Endothelial cell of umbilical vein (primary cell): ENCODE measurements at regions of chr4 and their contacts with region 1.

Region 1: DNA sequence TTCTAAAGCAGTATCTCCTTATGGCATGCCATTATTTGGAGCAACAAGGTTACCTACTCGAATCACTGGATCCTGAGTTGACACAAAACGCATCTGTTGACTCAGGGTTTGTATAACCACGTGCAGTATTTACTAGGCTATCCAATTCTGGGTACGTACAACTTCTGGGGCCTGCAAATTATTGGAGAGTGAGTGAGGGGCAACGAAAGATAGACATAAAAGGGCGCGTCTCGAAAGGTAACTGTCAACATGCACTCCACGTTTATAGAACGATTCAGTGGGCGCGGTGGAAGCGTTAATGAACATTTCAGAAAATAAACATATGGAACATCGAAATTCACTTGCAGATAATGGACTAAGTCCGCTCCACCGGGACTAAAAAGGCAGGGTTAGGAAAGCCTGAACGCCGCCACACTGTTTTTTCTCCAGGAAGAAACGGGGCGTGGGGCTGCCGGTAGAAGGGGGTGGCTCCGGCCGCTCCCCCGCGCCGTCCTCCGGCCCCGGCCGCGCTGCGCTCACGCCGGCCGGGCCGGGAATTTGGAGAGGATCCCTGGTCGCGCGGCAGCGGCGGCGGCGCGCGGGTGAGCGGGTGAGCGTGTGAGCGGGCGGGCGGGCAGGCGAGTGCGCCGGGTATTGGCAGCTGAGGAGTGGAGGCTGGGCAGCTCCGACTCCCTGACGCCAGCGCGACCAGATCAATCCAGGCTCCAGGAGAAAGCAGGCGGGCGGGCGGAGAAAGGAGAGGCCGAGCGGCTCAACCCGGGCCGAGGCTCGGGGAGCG is at the start of gene SMAD1:
- DNase-seq: peak; percentile 76
- H3K4me3 ChIP-seq: peak within 1 kb of the TSS; percentile 82 to 99 (median 98)
- H3K27ac ChIP-seq: peak within 1 kb of the TSS; percentile 60
- H3K4me1 ChIP-seq: peaks cover 18% of the 10 kb centered on the region
- H3K27me3 ChIP-seq: no peaks in the 10 kb centered on the region
- CTCF ChIP-seq: no peak
- POLR2A ChIP-seq: peak; percentile 59
- total RNA-seq, gene SMAD1: 93.5 and 101 TPM in 2 replicates

Region 2: GRCh38 chr4:145180298-145181090 is 300.9 kb before region 1 on chr4 and contains the start of gene OTUD4:
- CTCF ChIA-PET with region 1: no interaction called
- POLR2A ChIA-PET with region 1: no interaction called
- dilution Hi-C with region 1: no loop called
- intact Hi-C with region 1: loop called (anchors 5 kb)
- DNase-seq: peak; percentile 96
- H3K4me3 ChIP-seq: peak within 1 kb of the TSS; percentile 78 to 93 (median 92)
- H3K27ac ChIP-seq: peak within 1 kb of the TSS; percentile 78
- H3K4me1 ChIP-seq: peaks cover 18% of the 10 kb centered on the region
- H3K27me3 ChIP-seq: no peaks in the 10 kb centered on the region
- CTCF ChIP-seq: peak in 1 of 2 donors; percentile 25
- POLR2A ChIP-seq: no peak
- total RNA-seq, gene OTUD4: 39.5 and 40.9 TPM in 2 replicates

Region 3: DNA sequence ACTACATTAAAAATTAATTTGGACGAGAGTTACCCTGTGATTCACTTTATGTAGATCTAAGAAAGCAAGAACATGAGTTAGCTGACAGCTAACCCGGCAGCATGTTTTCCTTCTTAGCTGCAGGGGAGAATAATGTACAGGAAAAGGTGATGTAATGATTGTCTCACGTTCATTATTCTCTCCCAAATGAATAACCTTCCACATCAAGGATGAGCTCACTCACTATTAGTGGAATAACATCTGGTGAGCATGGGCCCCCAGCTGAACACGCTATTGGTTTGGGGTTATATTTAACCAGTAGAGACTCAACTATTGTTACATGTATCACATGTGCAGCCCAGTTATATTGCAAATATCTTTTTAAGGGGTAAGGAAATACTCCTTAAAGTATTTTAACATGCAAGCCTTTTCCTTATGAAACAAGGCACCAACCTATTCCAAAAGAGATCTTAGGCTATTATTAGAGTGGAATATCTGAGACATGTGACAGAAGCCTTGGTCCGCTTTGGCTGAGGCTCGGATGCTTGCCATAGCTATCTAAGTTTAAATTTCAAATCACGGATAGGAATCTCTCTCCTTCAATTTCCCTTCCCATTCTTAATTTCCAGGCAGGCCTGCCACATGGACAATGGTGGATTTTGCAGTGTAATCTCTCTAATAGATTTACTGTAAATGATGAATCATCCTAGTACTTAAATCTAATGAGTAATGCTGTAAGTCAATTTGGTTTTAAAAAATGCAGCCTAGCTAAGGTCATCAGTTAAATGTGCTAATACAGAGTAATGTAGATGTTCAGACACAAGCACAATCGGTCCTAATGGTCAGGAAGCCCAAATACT is 202.0 kb before region 1 on chr4:
- CTCF ChIA-PET with region 1: no interaction called
- POLR2A ChIA-PET with region 1: no interaction called
- dilution Hi-C with region 1: no loop called
- intact Hi-C with region 1: loop called (anchors 1 kb)
- DNase-seq: peak; percentile 84
- H3K4me3 ChIP-seq: no peak overlapping the region
- H3K27ac ChIP-seq: peak overlapping the region; percentile 97
- H3K4me1 ChIP-seq: peaks cover 38% of the 10 kb centered on the region
- H3K27me3 ChIP-seq: no peaks in the 10 kb centered on the region
- CTCF ChIP-seq: no peak
- POLR2A ChIP-seq: no peak

Region 4: DNA sequence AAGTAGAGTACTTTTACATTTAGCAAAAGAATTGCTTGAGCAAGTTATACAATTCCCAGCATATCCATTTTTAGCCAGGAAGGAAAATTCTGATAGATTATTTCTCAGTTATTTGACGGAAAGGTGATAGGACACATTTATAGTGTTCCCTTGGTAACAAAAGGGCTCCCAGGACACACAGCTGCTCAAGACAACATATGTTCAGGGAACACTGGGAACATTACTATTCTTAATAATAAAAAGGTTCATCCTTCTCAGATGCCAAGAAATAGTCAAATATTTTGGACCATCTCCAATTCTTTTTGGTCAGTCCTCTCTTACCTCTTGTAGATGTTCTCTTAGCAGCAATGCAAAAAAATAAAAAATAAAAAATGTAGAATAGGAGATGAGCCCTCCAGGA is 66.5 kb before region 1 on chr4:
- CTCF ChIA-PET with region 1: no interaction called
- POLR2A ChIA-PET with region 1: no interaction called
- dilution Hi-C with region 1: no loop called
- intact Hi-C with region 1: no loop called
- DNase-seq: no peak
- H3K4me3 ChIP-seq: no peak overlapping the region
- H3K27ac ChIP-seq: no peak overlapping the region
- H3K4me1 ChIP-seq: no peaks in the 10 kb centered on the region
- H3K27me3 ChIP-seq: peaks cover 0 to 4% of the 10 kb centered on the region in 2 experiments
- CTCF ChIP-seq: no peak
- POLR2A ChIP-seq: no peak

Region 5: DNA sequence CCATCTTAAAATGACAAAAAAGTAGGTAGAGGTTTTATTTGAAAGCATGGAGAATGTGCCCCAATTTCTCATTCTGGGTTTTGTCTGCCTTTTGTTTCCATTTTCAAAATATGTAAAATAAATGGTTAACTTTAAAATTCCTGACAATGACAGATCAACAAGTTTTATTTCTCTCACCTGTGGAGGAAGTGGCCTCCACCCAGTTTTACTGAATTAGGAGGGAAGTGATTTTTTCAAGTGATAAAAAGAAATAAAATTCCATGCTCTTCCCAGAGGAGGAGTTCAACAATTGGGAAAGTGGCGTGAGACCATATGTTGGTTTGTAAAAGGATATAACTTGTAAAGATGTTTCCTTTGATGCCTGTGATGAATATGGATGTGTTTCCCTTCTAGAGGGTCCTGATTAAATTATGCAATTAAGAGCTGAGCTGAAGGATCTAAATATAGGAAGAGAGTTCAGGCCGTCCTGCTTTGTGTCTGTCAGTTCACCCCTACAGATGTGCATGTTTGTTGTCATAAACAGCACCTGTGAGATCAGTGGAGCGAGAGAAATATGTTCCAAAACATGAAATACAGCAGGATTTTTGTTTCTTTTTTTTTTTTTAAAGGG is 19.8 kb after region 1 on chr4:
- CTCF ChIA-PET with region 1: interaction called, 3 read pairs
- POLR2A ChIA-PET with region 1: interaction called, 6 read pairs
- dilution Hi-C with region 1: no loop called
- intact Hi-C with region 1: loop called (anchors 1 kb)
- DNase-seq: peak; percentile 91
- H3K4me3 ChIP-seq: no peak overlapping the region
- H3K27ac ChIP-seq: peak overlapping the region; percentile 27
- H3K4me1 ChIP-seq: peaks cover 54% of the 10 kb centered on the region
- H3K27me3 ChIP-seq: no peaks in the 10 kb centered on the region
- CTCF ChIP-seq: no peak
- POLR2A ChIP-seq: no peak

Region 6: GRCh38 chr4:145609481-145610427 is 128.4 kb after region 1 on chr4:
- CTCF ChIA-PET with region 1: interaction called, 9 read pairs
- POLR2A ChIA-PET with region 1: no interaction called
- dilution Hi-C with region 1: no loop called
- intact Hi-C with region 1: loop called (anchors 1 kb)
- DNase-seq: peak; percentile 91
- H3K4me3 ChIP-seq: no peak overlapping the region
- H3K27ac ChIP-seq: no peak overlapping the region
- H3K4me1 ChIP-seq: peaks cover 8% of the 10 kb centered on the region
- H3K27me3 ChIP-seq: peaks cover 0 to 10% of the 10 kb centered on the region in 2 experiments
- CTCF ChIP-seq: peak; percentile 60 to 67
- POLR2A ChIP-seq: no peak

Region 7: DNA sequence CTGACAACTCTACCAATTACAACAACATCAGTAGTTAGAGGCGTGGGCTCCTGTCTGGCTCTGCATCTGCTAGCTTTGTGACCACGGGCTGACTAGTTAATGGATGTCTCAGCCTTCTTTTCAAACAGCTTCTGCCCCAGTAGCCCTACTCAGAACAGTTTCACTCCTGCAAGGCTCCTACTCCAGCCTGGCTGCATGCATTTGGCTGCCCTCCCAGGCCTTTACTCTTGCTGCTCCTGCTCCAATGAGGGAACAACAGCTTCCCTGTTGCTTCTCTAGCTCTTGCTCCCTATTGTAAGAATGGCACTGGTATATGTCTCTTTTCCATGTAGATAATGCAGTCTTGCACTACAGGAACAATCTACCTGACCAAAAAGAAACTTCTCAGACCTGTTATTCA is 1371.0 kb after region 1 on chr4:
- CTCF ChIA-PET with region 1: no interaction called
- POLR2A ChIA-PET with region 1: no interaction called
- dilution Hi-C with region 1: no loop called
- intact Hi-C with region 1: no loop called
- DNase-seq: no peak
- H3K4me3 ChIP-seq: no peak overlapping the region
- H3K27ac ChIP-seq: no peak overlapping the region
- H3K4me1 ChIP-seq: no peaks in the 10 kb centered on the region
- H3K27me3 ChIP-seq: peaks cover 3 to 6% of the 10 kb centered on the region in 2 experiments
- CTCF ChIP-seq: no peak
- POLR2A ChIP-seq: no peak